IMR-90 (cell line): ENCODE measurements at regions of chrX and their contacts with region 1.

Region 1: GRCh38 chrX:38327007-38327774 is at the start of gene RPGR:
- DNase-seq: peak; percentile 91
- ATAC-seq: peak; percentile 96
- H3K4me3 ChIP-seq: peak within 1 kb of the TSS; percentile 89
- H3K27ac ChIP-seq: peak within 1 kb of the TSS; percentile 74
- H3K4me1 ChIP-seq: no peaks in the 10 kb centered on the region
- H3K27me3 ChIP-seq: no peaks in the 10 kb centered on the region
- CTCF ChIP-seq: peak; percentile 81
- POLR2A ChIP-seq: peak; percentile 53; the same call in 1 of the 2 replicates
- RAD21 ChIP-seq: peak; percentile 80
- total RNA-seq, gene RPGR: 3.8 and 6.7 TPM in 2 replicates

Region 2: DNA sequence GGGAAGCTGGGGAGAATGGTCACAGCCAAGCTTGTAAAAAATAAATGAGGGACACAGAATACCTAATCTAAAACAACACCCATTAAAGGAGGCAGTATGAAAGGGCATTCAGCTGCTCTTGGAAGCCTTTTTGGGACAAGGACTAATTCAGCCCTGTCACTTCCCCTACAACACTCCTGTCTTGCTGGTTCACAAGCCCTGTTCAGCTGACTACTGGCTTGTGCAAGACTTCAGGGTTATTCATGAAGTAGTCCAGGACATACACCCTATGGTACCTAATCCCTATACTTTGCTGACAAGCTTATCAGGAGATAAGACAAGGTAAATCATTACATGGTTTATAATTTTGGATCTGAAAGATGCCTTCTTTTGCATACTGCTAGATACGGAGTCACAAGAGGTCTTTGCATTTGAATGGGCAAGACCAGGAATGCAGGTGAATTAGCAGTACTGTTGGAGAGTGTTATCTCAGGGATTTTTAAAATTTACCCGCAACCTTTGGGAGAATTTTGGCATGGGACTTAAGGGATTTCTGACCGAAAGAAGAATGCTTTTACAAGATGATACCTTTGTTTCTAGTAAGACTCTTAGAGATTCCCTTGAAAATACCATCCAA is 859.0 kb before region 1 on chrX:
- CTCF ChIA-PET with region 1: no interaction called
- POLR2A ChIA-PET with region 1: no interaction called
- dilution Hi-C with region 1: no loop called
- in situ Hi-C with region 1: no loop called
- intact Hi-C with region 1: no loop called
- DNase-seq: no peak
- ATAC-seq: no peak
- H3K4me3 ChIP-seq: no peak overlapping the region
- H3K27ac ChIP-seq: no peak overlapping the region
- H3K4me1 ChIP-seq: no peaks in the 10 kb centered on the region
- H3K27me3 ChIP-seq: no peaks in the 10 kb centered on the region
- CTCF ChIP-seq: no peak
- POLR2A ChIP-seq: no peak
- RAD21 ChIP-seq: no peak

Region 3: DNA sequence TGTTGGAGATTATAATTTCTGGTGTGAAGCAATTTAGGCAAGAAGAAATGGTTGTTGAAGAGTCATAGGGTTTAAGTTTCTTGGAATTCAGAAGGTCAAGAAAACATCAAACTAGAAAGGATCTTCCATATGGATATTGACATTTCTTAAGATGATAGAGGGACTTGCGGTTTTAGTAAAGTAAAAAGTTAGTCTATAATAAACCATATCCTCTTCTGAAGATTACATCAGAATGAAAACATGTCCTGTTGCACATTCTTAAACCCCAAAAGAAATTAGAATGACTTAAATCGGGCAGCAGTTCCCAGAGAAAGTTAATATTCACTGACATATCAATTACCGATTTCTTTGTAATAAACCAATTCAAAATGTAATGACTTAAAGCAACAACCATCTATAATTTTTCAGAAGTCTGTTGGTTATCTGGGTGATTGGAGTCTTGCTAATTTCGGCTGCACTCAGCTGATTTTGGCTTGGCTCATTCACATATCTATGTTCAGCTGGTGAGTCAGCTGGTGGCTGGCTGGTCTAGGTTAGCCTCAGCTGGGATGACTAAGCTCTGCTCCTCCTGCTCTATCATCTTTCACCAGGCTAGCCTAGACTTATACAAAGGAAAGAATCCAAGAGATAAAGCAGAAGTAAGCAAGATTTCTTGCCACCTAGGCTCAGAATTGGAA is 455.4 kb before region 1 on chrX:
- CTCF ChIA-PET with region 1: no interaction called
- POLR2A ChIA-PET with region 1: no interaction called
- dilution Hi-C with region 1: no loop called
- in situ Hi-C with region 1: no loop called
- intact Hi-C with region 1: loop called (anchors 1 kb)
- DNase-seq: peak; percentile 93
- ATAC-seq: peak; percentile 96
- H3K4me3 ChIP-seq: no peak overlapping the region
- H3K27ac ChIP-seq: no peak overlapping the region
- H3K4me1 ChIP-seq: peaks cover 3% of the 10 kb centered on the region
- H3K27me3 ChIP-seq: no peaks in the 10 kb centered on the region
- CTCF ChIP-seq: no peak
- POLR2A ChIP-seq: no peak
- RAD21 ChIP-seq: no peak

Region 4: DNA sequence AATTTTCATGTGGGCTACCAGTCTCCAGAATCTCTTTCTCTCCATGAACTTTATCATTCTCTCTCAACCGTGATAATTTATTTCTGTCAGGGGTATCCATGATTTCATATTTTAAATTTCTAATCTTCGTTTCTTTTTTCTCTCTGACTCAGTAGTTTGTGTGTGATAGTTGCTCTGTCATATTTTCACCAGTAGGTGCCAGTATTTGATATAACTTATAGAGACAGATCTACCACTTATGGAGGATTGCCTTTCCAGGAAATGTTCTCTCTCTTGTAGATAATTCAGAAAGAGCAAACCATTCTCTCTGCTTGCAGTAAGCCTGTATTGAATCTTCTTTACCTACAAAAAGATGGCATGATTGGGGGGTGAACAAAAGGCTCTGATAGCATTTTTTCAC is 400.5 kb before region 1 on chrX:
- CTCF ChIA-PET with region 1: no interaction called
- POLR2A ChIA-PET with region 1: no interaction called
- dilution Hi-C with region 1: no loop called
- in situ Hi-C with region 1: no loop called
- intact Hi-C with region 1: loop called (anchors 1 kb)
- DNase-seq: peak; percentile 41
- ATAC-seq: peak; percentile 76
- H3K4me3 ChIP-seq: no peak overlapping the region
- H3K27ac ChIP-seq: no peak overlapping the region
- H3K4me1 ChIP-seq: no peaks in the 10 kb centered on the region
- H3K27me3 ChIP-seq: no peaks in the 10 kb centered on the region
- CTCF ChIP-seq: peak; percentile 61
- POLR2A ChIP-seq: no peak
- RAD21 ChIP-seq: peak; percentile 59

Region 5: GRCh38 chrX:38095971-38096529 is 231.1 kb before region 1 on chrX:
- CTCF ChIA-PET with region 1: no interaction called
- POLR2A ChIA-PET with region 1: no interaction called
- dilution Hi-C with region 1: no loop called
- in situ Hi-C with region 1: no loop called
- intact Hi-C with region 1: no loop called
- DNase-seq: peak; percentile 58
- ATAC-seq: peak; percentile 65; the same call in 1 of the 2 replicates
- H3K4me3 ChIP-seq: no peak overlapping the region; the same call in 1 of the 2 replicates
- H3K27ac ChIP-seq: no peak overlapping the region
- H3K4me1 ChIP-seq: no peaks in the 10 kb centered on the region
- H3K27me3 ChIP-seq: no peaks in the 10 kb centered on the region
- CTCF ChIP-seq: no peak
- POLR2A ChIP-seq: no peak
- RAD21 ChIP-seq: no peak

Region 6: GRCh38 chrX:38192007-38192810 is 135.0 kb before region 1 on chrX:
- CTCF ChIA-PET with region 1: interaction called, 8 read pairs
- POLR2A ChIA-PET with region 1: no interaction called
- dilution Hi-C with region 1: no loop called
- in situ Hi-C with region 1: no loop called
- intact Hi-C with region 1: loop called (anchors 1 kb)
- DNase-seq: peak; percentile 25
- ATAC-seq: no peak
- H3K4me3 ChIP-seq: no peak overlapping the region
- H3K27ac ChIP-seq: no peak overlapping the region
- H3K4me1 ChIP-seq: no peaks in the 10 kb centered on the region
- H3K27me3 ChIP-seq: no peaks in the 10 kb centered on the region; the same call in 1 of the 2 replicates
- CTCF ChIP-seq: peak; percentile 45
- POLR2A ChIP-seq: no peak
- RAD21 ChIP-seq: peak; percentile 58

Region 7: DNA sequence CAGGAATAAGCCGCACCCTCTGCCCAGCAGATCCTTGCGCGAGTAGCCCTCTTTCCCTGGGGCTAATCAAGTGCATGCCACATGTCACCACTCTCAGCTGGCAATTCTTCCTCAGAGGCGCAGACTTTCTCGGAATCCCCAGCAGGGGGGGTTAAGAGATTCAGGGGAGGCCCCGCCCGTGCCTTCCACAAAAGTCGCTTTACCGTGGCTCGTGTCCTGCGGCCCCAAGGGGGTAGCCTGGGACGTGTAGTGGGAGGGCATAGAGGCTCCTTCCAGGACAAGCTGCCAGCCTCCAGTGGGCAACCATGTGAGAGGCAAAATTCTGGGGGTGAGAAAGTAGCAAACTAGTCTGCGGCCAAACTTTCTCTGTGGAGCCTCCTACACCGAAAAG is 107.2 kb before region 1 on chrX:
- CTCF ChIA-PET with region 1: interaction called, 4 read pairs
- POLR2A ChIA-PET with region 1: no interaction called
- dilution Hi-C with region 1: no loop called
- in situ Hi-C with region 1: no loop called
- intact Hi-C with region 1: loop called (anchors 1 kb)
- DNase-seq: peak; percentile 52
- ATAC-seq: peak; percentile 65
- H3K4me3 ChIP-seq: peak overlapping the region; percentile 71
- H3K27ac ChIP-seq: peak overlapping the region; percentile 15
- H3K4me1 ChIP-seq: peaks cover 2% of the 10 kb centered on the region; the same call in 1 of the 2 replicates
- H3K27me3 ChIP-seq: no peaks in the 10 kb centered on the region
- CTCF ChIP-seq: peak; percentile 44
- POLR2A ChIP-seq: no peak
- RAD21 ChIP-seq: peak; percentile 27

Region 8: DNA sequence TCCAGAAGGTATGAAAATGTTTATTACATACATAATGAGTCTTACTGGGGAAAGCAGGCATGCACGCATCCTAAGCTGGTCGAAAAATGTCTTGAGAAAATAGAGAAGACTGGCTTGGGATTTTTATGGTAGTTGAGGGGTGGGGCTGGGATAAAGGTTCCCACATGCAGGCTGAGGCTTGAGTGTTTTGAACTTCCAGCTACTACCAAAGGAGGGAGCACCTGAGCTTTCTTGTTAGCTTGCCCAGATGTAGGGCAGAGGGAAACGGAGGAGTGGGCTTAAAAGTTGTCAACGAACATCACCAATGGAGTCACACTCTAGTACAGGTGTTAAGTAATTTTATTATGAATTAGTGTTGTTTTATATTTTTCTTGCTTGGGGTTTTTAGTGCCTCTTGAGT is 67.0 kb before region 1 on chrX:
- CTCF ChIA-PET with region 1: interaction called, 4 read pairs
- POLR2A ChIA-PET with region 1: no interaction called
- dilution Hi-C with region 1: no loop called
- in situ Hi-C with region 1: no loop called
- intact Hi-C with region 1: loop called (anchors 5 kb)
- DNase-seq: peak; percentile 11
- ATAC-seq: no peak
- H3K4me3 ChIP-seq: no peak overlapping the region
- H3K27ac ChIP-seq: no peak overlapping the region
- H3K4me1 ChIP-seq: no peaks in the 10 kb centered on the region; the same call in 1 of the 2 replicates
- H3K27me3 ChIP-seq: no peaks in the 10 kb centered on the region
- CTCF ChIP-seq: peak; percentile 33
- POLR2A ChIP-seq: no peak
- RAD21 ChIP-seq: peak; percentile 27; the same call in 1 of the 2 replicates